Right ventricle myocardium inferior (tissue), 1 donor: ENCODE measurements at regions of chr16 and their contacts with region 1.

Region 1: GRCh38 chr16:22346483-22346882 is 27.9 kb downstream of the CDR2 start:
- DNase-seq: no peak
- ATAC-seq: peak; percentile 18

Region 2: DNA sequence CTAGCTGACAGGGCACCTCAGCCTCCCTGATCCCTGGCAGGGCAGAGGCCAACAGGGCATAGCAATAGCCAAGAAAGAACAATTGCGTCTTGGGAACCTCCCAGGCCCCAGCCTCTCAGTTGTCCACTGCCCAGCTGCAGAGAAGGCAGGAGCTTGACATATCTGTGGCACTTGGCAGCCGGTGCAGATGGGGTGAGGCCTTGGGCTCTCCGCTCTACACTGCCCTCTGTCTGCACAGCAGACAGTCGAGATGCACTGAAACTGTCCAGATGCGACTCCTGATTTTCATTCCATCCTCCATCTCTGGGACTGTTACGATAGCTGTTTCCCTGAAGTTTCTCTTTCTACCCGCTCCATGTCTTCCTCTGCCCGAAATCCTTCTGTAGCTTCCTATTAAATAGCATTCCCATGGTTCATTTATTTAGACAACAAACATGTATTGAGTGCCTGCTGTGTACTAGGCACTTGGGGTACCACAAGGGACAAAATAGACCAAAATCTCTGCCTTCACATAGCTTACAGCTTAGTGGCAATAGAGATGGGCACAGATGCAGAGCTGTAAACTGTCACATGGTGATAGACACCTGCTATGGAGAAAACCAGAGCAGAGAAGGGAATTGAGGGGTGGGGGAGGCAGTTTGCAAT is 45.9 kb before region 1 on chr16:
- intact Hi-C with region 1: no loop called
- DNase-seq: no peak
- ATAC-seq: peak; percentile 22

Region 3: GRCh38 chr16:22424161-22424937 is 77.9 kb after region 1 on chr16:
- intact Hi-C with region 1: loop called (anchors 10 kb)
- DNase-seq: no peak
- ATAC-seq: no peak